Activated CD4-positive, alpha-beta T cell treated with anti-CD3 and anti-CD28 coated beads, Interleukin-2, amount 10 ng/mL, durations not matched to agents 7 days and 5 days (primary cell): ENCODE measurements at regions of chr11 and their contacts with region 1.

Region 1: DNA sequence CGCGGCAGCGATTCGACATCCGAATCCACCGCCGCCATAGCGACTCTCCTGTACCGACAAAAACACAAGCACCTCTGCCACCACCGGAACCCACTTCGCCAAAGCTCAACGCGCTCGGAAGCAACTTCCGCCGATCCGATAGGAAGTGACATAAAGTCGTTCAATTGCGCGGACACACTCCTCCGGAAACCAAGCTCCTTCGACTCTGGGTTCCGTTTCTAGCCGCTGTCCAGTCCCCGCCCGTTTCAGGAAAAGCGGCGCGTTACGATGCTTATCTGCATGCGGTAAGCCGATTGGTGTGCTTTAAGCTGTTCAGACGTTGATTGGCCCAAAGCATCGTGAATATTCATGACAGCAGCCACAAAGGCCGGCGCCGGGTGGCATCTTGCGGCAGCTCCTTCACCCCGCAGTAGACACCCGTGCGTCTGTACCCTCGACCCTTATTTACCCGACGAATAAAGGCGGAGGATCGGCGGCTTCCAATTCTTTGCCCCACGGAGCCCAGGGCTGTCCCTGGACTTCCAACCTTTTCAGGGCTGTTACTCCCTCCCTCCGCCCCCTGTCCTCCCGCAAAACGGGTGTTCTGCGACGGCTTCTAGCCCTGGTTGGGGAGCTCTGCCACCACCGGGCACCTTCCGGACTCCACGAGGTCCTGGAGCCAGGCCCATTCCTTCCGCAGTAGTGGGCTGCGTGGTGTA is at the start of gene TUT1:
- DNase-seq: peak; percentile 98
- H3K4me3 Mint-ChIP-seq: peak within 1 kb of the TSS; percentile 97
- H3K27ac Mint-ChIP-seq: peak within 1 kb of the TSS; percentile 95
- H3K4me1 Mint-ChIP-seq: peaks cover 58% of the 10 kb centered on the region
- H3K27me3 Mint-ChIP-seq: no peaks in the 10 kb centered on the region
- total RNA-seq, gene TUT1: 24.1 to 26.0 TPM

Region 2: DNA sequence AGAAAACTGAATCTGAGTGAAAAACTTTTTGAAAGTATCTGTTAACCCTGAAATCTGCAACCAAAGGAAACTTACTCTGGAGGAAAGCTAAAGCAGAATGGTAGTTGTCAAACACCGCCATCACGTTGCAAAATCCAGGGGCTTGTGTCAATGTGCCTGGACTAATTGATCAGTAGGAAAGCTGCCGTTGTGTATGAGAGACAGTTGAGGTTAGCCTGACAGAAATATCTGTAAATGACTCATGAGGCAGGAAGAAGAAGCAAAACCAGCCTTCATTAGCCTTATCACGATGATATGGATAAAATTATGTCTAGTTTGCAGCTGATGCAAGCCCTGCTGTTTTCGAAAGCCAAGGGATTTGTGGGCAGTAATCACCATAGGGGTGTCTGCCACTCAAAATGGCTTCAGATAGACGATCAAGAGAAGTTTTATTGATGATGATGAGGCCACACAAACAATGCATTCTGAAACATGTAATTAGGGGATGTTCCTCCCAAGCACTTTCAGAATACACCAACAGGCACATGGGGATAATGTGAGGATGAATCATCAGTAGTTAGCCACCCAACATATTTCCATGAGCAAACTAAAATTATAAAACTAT is 163.9 kb before region 1 on chr11:
- CTCF ChIA-PET with region 1: interaction called, 18 read pairs
- POLR2A ChIA-PET with region 1: interaction called, 3 read pairs
- DNase-seq: peak; percentile 24
- H3K4me3 Mint-ChIP-seq: peak overlapping the region; percentile 3
- H3K27ac Mint-ChIP-seq: peak overlapping the region; percentile 88
- H3K4me1 Mint-ChIP-seq: peaks cover 60% of the 10 kb centered on the region
- H3K27me3 Mint-ChIP-seq: peaks cover 5% of the 10 kb centered on the region

Region 3: DNA sequence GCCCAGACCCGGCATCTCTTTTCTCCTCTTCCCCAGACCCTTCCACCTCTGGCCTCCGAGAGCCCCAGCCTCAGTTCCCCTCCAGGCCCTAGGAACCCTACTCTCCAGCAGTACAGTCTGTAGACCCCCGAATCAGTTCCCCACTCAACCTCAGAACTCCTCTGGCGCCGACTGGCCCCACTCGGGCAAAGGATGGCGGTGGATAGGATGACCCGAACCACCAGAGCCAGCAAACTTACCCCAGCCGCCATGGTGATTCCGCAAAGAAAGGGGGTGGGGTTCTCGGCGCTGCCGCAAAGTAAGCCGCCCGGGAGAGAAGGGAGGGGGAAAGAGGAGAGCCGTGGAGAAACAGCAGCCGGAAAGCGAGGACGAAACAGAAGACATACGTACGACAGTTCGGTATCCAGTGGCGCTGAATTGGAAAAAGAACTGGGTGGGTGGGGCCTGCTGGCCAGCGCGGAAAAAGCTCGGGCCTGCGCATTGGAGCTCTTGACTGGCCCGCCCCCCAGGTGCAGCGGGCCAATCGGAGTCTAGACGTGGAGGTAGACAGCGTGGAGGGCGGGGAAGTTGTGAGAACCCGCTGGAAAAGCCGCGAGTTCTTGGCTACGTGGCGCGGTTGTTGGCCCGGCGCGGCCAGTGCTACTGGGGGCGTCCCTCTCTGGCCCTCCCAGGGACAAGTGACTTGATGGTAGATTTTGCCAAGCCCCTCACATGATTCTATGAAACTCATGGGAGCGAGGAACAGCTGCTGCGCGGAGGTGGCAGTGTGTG is 17.8 kb before region 1 on chr11 and contains the start of gene EEF1G:
- CTCF ChIA-PET with region 1: interaction called, 8 read pairs
- POLR2A ChIA-PET with region 1: interaction called, 14 read pairs
- DNase-seq: peak; percentile 99
- H3K4me3 Mint-ChIP-seq: peak within 1 kb of the TSS; percentile 96
- H3K27ac Mint-ChIP-seq: peak within 1 kb of the TSS; percentile 94
- H3K4me1 Mint-ChIP-seq: peaks cover 56% of the 10 kb centered on the region
- H3K27me3 Mint-ChIP-seq: no peaks in the 10 kb centered on the region
- total RNA-seq, gene EEF1G: 1,239 to 1,470 TPM

Region 4: DNA sequence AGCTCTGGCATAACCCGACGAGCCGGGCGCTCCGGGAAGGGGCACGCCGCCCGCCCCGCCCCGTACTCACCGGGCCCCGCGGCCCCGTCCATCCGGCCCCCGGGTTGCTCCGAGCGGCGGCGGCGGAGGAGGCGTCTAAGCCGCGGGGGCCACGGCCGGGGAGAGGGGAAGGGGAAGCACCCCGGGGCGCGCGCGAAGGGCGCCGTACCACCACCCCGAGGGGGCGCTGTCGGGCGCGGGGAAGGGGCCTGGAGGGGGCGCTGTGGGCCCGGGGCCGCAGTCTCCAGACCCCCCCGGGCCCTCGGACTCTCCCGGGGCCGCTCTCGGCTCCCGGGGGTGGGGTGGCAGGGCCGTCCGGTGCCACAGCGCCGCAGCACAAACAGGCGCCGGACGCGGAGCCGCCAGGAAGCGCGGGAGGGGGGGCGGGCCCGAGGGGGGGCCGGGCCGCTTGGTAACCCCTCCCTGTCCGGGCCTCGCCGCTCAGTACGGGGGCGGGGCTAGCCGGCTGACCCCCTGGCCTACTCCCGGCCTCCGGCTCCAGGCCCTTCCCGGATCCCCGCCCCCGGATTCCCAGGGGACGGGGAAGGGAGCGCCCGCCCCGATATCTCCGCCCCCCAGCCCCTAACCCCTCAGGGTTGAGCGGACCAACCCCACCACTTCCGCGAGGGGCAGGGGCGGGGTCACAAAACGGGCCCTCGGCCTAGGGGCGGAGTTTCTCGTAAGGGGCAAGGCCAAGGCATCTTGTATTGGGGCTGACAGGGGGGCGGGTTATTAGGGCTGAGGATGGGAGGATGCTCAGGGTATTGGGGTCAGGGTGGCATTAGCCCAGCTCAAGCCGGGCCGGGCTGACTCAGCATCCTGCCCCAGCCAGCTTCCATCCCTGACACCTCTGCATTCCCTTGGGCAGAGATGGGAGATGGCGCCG is 21.0 kb after region 1 on chr11 and contains the starts of genes EML3 and ROM1:
- CTCF ChIA-PET with region 1: interaction called, 25 read pairs
- POLR2A ChIA-PET with region 1: no interaction called
- DNase-seq: peak; percentile 90
- H3K4me3 Mint-ChIP-seq: peak within 1 kb of the TSS; percentile 96
- H3K27ac Mint-ChIP-seq: peak within 1 kb of the TSS; percentile 94
- H3K4me1 Mint-ChIP-seq: peaks cover 54% of the 10 kb centered on the region
- H3K27me3 Mint-ChIP-seq: no peaks in the 10 kb centered on the region
- total RNA-seq, gene EML3: 137 to 144 TPM
- total RNA-seq, gene ROM1: 1.0 to 1.3 TPM

Region 5: GRCh38 chr11:62678770-62679696 is 87.4 kb after region 1 on chr11 and contains the start of gene UBXN1:
- CTCF ChIA-PET with region 1: interaction called, 16 read pairs
- POLR2A ChIA-PET with region 1: no interaction called
- DNase-seq: peak; percentile 89
- H3K4me3 Mint-ChIP-seq: peak within 1 kb of the TSS; percentile 90
- H3K27ac Mint-ChIP-seq: peak within 1 kb of the TSS; percentile 92
- H3K4me1 Mint-ChIP-seq: peaks cover 42% of the 10 kb centered on the region
- H3K27me3 Mint-ChIP-seq: no peaks in the 10 kb centered on the region
- total RNA-seq, gene UBXN1: 126 to 146 TPM